ENCODE measurements at regions of chr20 and their contacts with region 1.

Region 1: DNA sequence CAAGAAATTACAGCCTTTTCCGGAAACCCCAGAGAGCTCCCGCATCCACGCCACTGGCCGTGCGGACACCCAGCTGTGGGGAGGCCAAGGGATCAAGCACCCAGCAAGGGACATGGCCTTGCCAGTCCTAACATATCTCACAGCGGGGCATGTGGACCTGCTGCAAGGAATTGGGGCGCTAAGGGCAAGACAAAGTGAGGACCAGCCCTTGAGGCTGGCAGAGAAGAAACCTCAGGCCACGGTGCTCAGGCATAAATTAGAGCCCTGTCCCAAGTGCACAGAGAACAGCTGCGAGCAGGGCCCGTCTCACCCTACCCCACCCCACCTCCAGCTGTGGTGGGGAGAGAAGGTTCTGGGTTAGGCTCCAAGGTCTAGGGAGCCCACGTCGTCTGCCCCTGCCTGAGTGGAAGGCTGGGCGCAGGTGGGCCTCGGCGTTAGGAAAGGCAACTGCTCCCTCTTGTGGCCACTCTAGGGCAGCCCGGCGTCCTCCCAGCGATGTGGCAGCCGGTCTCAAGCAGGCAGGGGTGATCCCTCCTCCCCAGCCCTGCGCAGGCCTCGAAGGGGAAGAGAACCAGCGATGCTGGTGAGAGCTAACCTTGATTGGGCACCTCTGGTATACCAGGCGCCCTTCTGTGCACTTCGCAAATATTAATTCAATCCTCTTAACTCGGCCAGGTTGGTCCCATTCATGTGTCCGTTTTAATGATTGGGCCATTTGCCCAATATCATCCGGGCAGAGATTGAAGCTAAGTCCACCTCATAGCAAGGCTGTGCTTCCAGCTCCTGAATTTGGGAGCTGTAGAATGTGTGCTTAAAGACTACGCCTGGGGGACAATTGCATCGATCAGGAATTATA is 235.8 kb downstream of the NFATC2 start:
- DNase-seq: peak; percentile 65 to 92
- H3K4me3 ChIP-seq: peak overlapping the region in 1 of 4 experiments; percentile 13; a peak in 2 of 8 replicates
- H3K27ac ChIP-seq: no peak overlapping the region
- H3K4me1 ChIP-seq: peaks cover 15 to 35% (median 27%) of the 10 kb centered on the region in 4 experiments
- H3K27me3 ChIP-seq: peaks cover 2 to 16% (median 13%) of the 10 kb centered on the region in 4 experiments; a peak in 5 of 7 replicates
- CTCF ChIP-seq: peak; percentile 93 to 97 (median 97)
- EP300 ChIP-seq: no peak
- POLR2A ChIP-seq: no peak
- RAD21 ChIP-seq: peak; percentile 97 to 99

Region 2: DNA sequence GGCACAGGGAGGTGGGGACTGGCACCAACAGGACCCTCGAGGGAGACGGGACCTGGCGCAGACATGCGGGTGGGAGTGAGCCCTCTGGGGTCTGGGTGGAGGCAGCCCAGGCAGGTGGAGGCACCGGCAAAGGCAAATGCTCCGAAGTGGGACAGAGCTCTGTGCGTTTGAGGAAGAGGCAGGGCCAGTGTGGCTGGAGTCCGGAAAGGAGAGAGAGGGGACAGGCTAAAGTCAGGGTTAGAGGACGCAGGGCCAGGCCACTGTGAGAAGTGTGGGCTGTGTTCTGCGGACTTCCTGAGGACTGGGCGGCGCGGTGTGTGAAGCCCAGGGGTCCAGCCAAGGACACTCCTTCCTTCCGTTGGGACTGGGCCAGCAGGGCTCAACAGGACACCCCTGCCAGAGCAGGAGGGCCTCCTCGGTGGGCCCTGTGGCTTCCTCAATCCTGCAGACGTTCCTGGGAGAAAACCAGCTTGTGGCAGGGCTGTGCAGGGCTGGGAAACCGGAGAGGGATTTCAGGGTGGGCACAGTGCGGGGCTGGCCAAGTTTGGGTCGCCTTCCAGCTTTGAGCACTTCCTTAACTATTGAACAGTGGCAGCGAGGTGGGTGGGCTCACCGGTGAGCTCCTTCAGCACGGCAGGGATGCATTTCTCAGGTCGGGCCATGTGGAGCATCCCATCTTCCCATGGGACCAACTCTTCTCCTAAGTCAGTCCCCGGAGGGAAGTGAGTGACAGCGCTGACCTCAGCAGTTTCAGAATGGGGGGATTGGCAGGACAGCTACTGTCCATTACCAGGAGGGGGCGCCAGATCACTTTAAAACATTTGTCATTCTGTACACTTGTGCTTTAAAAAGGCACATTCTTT is 325.6 kb before region 1 on chr20:
- CTCF ChIA-PET with region 1: interaction called, 245 read pairs
- POLR2A ChIA-PET with region 1: no interaction called
- DNase-seq: peak in 1 of 2 experiments; percentile 82
- H3K4me3 ChIP-seq: no peak overlapping the region
- H3K27ac ChIP-seq: no peak overlapping the region
- H3K4me1 ChIP-seq: peaks cover 0 to 2% (median 0%) of the 10 kb centered on the region in 4 experiments; a peak in 1 of 7 replicates
- H3K27me3 ChIP-seq: no peaks in the 10 kb centered on the region; a peak in 1 of 7 replicates
- CTCF ChIP-seq: peak; percentile 64 to 83 (median 76)
- EP300 ChIP-seq: no peak
- POLR2A ChIP-seq: no peak
- RAD21 ChIP-seq: peak; percentile 72 to 79

Region 3: DNA sequence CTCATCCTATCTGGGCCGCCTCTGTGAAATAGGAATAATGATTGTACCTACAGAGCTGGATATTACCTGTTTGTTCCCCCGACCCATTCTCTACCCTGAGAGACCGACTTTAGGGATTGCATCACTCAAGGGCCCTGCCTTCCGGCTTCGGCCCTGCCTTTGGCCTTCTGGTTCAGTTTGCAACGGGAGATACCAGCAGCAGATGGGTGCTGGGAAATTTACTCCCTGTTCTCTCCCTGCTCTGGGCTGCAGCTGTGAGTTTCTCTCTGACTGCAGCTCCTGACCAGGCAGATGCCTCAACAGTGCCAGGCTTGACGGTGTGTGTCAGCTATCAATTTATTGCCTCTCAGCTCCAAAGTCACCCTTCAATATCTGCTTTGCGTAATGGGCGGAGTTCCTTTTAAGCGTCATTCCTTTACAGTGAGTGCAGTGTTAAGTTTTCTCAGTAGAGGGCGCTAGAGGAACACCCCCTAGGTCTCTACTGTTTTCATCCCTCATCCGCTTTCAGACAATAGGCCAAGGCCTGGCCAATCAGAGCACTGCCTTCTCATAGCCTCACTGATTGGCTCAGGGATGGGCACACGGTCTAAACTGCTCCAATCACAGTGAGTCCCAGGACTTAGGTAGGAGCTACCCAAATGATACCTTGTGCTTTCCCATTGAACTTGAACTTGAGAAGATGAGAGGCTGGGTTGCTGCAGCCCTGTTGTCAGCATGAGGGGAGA is 313.8 kb before region 1 on chr20:
- CTCF ChIA-PET with region 1: interaction called, 245 read pairs
- POLR2A ChIA-PET with region 1: interaction called, 30 read pairs
- DNase-seq: peak; percentile 66 to 82
- H3K4me3 ChIP-seq: peak overlapping the region in 3 of 4 experiments; percentile 8 to 40 (median 16); a peak in 4 of 8 replicates
- H3K27ac ChIP-seq: peak overlapping the region; percentile 44; the same call in 1 of the 2 replicates
- H3K4me1 ChIP-seq: peaks cover 3 to 19% (median 8%) of the 10 kb centered on the region in 4 experiments; a peak in 6 of 7 replicates
- H3K27me3 ChIP-seq: peaks cover 0 to 2% (median 0%) of the 10 kb centered on the region in 4 experiments; a peak in 1 of 7 replicates
- CTCF ChIP-seq: peak in 2 of 3 experiments; percentile 73 to 96; a peak in 3 of 4 replicates
- EP300 ChIP-seq: no peak
- POLR2A ChIP-seq: no peak
- RAD21 ChIP-seq: peak; percentile 89

Region 4: GRCh38 chr20:51029963-51030920 is 276.5 kb before region 1 on chr20:
- CTCF ChIA-PET with region 1: interaction called, 18 read pairs
- POLR2A ChIA-PET with region 1: no interaction called
- DNase-seq: no peak
- H3K4me3 ChIP-seq: no peak overlapping the region
- H3K27ac ChIP-seq: no peak overlapping the region
- H3K4me1 ChIP-seq: 0 out of 7 replicates have a peak, but pooled peaks cover 0 to 2% (median 0%) of the 10 kb centered on the region in 4 experiments
- H3K27me3 ChIP-seq: peaks cover 0 to 7% (median 4%) of the 10 kb centered on the region in 4 experiments; a peak in 3 of 7 replicates
- CTCF ChIP-seq: no peak
- EP300 ChIP-seq: no peak
- POLR2A ChIP-seq: no peak
- RAD21 ChIP-seq: no peak

Region 5: GRCh38 chr20:51220293-51220706 is 86.4 kb before region 1 on chr20:
- CTCF ChIA-PET with region 1: interaction called, 12 read pairs
- POLR2A ChIA-PET with region 1: interaction called, 13 read pairs
- DNase-seq: peak in 1 of 2 experiments; percentile 93
- H3K4me3 ChIP-seq: no peak overlapping the region
- H3K27ac ChIP-seq: no peak overlapping the region
- H3K4me1 ChIP-seq: peaks cover 2 to 11% (median 3%) of the 10 kb centered on the region in 4 experiments; a peak in 5 of 7 replicates
- H3K27me3 ChIP-seq: peaks cover 0 to 6% (median under 1%) of the 10 kb centered on the region in 4 experiments; a peak in 3 of 7 replicates
- CTCF ChIP-seq: peak; percentile 76 to 99 (median 95)
- EP300 ChIP-seq: no peak
- POLR2A ChIP-seq: no peak
- RAD21 ChIP-seq: peak; percentile 77

Region 6: DNA sequence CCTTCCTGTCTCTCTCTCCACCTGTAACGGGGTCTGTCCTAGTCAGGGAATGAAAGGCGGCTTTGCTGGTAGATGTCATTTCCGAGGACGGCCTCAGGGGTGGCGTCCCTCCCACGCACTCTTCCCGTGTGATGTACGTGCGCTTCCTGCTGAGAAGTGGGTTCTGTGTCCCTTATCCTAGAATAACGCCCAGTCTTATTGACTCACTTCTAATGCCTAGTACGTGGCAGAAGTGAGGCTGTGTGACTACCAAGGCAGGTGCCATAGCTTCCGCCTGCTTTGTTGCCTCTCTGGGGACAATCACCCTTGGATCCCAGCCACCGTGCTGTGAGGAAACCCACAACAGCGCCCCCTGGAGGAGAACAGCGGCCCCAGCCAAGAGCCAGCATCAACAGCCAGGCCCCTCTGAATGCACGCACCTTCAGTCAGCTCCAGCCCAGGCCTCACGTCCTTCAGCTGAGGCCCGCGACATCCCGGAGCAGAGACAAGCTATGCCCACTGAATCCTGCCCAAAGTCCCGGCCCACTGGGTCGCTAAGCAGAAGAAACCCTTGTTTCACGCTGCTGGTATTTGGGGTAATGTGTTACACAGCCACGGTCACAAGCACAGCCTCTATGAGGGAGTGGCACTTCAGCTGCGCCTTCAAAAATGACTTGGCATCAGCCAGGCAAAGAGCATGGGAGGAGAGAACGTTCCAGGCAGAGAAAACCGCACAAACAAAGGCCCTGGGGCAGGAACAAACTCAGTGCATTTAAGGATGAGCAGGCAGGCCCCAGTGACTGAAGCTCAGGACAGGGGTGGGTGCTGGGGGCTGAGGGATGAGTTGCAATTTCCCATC is 11.5 kb after region 1 on chr20:
- CTCF ChIA-PET with region 1: interaction called, 110 read pairs
- POLR2A ChIA-PET with region 1: interaction called, 4 read pairs
- DNase-seq: peak; percentile 43 to 98
- H3K4me3 ChIP-seq: no peak overlapping the region
- H3K27ac ChIP-seq: no peak overlapping the region
- H3K4me1 ChIP-seq: peaks cover 0 to 21% (median 8%) of the 10 kb centered on the region in 4 experiments; a peak in 6 of 7 replicates
- H3K27me3 ChIP-seq: peaks cover 0 to 9% (median 6%) of the 10 kb centered on the region in 4 experiments; a peak in 5 of 7 replicates
- CTCF ChIP-seq: peak; percentile 86 to 94 (median 93)
- EP300 ChIP-seq: no peak
- POLR2A ChIP-seq: no peak
- RAD21 ChIP-seq: peak; percentile 63 to 75

Measured in H1 (cell line).